ENCODE measurements at regions of chr9 and their contacts with region 1.

Region 1: GRCh38 chr9:75200892-75201470 is 112.7 kb downstream of the OSTF1 start:
- DNase-seq: peak; percentile 22 to 52 (median 26)
- ATAC-seq: peak; percentile 22; the same call in 1 of the 3 replicates
- H3K4me3 ChIP-seq: no peak overlapping the region
- H3K27ac ChIP-seq: no peak overlapping the region
- H3K4me1 ChIP-seq: no peaks in the 10 kb centered on the region
- H3K27me3 ChIP-seq: peaks cover 0 to 7% of the 10 kb centered on the region in 2 experiments; a peak in 3 of 5 replicates
- CTCF ChIP-seq: peak; percentile 37 to 69 (median 40); a peak in 4 of 6 replicates
- EP300 ChIP-seq: no peak
- POLR2A ChIP-seq: no peak
- RAD21 ChIP-seq: peak; percentile 61 to 80

Region 2: DNA sequence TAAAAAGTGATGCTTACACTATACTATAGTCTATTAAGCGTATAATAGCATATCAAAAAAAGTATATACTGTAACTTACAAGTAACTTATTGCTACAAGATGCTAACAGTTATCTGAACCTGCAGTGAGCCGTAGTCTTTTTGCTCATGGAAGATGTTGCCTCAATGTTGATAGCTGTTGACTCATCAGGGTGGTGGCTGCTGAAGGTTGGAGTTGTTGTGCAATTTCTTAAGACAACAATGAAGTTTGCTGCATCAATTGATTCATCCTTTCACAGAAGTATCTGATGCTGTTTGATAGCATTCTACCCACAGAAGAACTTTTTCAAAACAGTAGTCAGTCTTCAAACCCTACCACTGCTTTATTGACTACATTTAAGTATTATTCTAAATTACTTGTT is 240.4 kb before region 1 on chr9:
- CTCF ChIA-PET with region 1: no interaction called
- POLR2A ChIA-PET with region 1: no interaction called
- in situ Hi-C with region 1: no loop called
- intact Hi-C with region 1: no loop called
- DNase-seq: no peak
- ATAC-seq: no peak
- H3K4me3 ChIP-seq: no peak overlapping the region
- H3K27ac ChIP-seq: no peak overlapping the region
- H3K4me1 ChIP-seq: no peaks in the 10 kb centered on the region
- H3K27me3 ChIP-seq: no peaks in the 10 kb centered on the region
- CTCF ChIP-seq: no peak
- EP300 ChIP-seq: no peak
- POLR2A ChIP-seq: no peak
- RAD21 ChIP-seq: no peak

Region 3: GRCh38 chr9:75238311-75238978 is 37.5 kb after region 1 on chr9:
- CTCF ChIA-PET with region 1: interaction called, 6 read pairs
- POLR2A ChIA-PET with region 1: no interaction called
- in situ Hi-C with region 1: no loop called
- intact Hi-C with region 1: loop called (anchors 1 kb)
- DNase-seq: peak; percentile 17 to 43 (median 23)
- ATAC-seq: peak; percentile 96
- H3K4me3 ChIP-seq: no peak overlapping the region
- H3K27ac ChIP-seq: no peak overlapping the region
- H3K4me1 ChIP-seq: no peaks in the 10 kb centered on the region
- H3K27me3 ChIP-seq: no peaks in the 10 kb centered on the region
- CTCF ChIP-seq: peak; percentile 31 to 63 (median 51); a peak in 5 of 6 replicates
- EP300 ChIP-seq: no peak
- POLR2A ChIP-seq: no peak
- RAD21 ChIP-seq: peak; percentile 36 to 61

Region 4: DNA sequence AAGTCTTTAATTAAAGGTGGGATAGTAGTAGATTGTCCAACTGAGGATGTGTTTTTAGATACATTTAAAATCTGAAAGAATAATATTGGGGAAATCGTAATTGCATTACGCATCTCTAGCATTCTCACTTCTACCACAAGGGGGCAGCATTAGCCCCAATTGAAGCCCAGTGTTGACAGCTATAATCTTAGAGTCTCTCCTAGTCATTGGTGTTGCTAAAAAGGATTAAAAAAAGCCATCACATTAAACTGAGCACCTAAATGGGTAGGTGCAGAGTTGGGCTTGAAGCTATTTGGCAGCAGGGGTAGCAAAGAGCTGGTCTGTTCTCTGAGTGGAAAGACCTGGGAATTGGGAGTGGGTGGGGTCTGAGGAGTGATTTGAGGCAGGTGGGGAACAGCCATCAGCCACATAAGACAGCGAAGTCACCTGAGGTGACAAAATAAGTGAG is 64.6 kb after region 1 on chr9:
- CTCF ChIA-PET with region 1: no interaction called
- POLR2A ChIA-PET with region 1: interaction called, 3 read pairs
- in situ Hi-C with region 1: no loop called
- intact Hi-C with region 1: loop called (anchors 2 kb)
- DNase-seq: peak; percentile 23 to 38 (median 32)
- ATAC-seq: peak; percentile 82
- H3K4me3 ChIP-seq: no peak overlapping the region
- H3K27ac ChIP-seq: no peak overlapping the region
- H3K4me1 ChIP-seq: no peaks in the 10 kb centered on the region
- H3K27me3 ChIP-seq: no peaks in the 10 kb centered on the region
- CTCF ChIP-seq: peak; percentile 54 to 69 (median 63)
- EP300 ChIP-seq: no peak
- POLR2A ChIP-seq: no peak
- RAD21 ChIP-seq: peak; percentile 37 to 67

Region 5: DNA sequence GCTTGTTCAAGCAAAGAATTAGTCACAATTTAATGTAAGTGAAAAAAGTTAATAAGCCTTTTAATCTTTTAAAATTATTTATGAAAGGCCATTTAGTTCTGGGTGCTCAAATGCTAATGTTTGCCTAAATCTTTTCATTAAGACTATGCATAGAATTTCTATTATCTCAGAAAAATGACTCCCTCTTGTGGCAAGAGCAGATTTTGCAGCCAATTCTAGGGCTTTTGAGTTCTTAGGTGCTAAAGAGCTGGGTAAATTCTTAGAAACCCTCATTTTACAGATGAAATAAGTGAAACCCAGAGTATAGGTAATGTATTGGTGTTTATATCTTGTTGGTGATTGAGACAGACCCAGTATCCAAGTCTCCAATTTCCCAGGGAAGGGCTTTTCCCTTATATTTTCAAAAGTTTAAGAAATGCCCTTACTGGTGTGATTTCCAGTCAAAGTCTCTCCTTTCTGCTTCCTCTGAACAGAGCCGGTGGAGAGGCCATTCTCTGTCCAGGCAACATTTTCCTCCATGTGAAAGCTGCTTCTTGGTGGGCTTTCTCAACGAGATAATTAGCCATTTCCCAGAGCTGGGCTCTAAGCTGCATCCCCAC is 665.4 kb after region 1 on chr9:
- CTCF ChIA-PET with region 1: no interaction called
- POLR2A ChIA-PET with region 1: no interaction called
- in situ Hi-C with region 1: no loop called
- intact Hi-C with region 1: loop called (anchors 5 kb)
- DNase-seq: peak; percentile 5 to 38 (median 8)
- ATAC-seq: no peak
- H3K4me3 ChIP-seq: no peak overlapping the region
- H3K27ac ChIP-seq: no peak overlapping the region
- H3K4me1 ChIP-seq: no peaks in the 10 kb centered on the region
- H3K27me3 ChIP-seq: no peaks in the 10 kb centered on the region
- CTCF ChIP-seq: peak; percentile 27 to 56 (median 45); a peak in 4 of 6 replicates
- EP300 ChIP-seq: no peak
- POLR2A ChIP-seq: no peak
- RAD21 ChIP-seq: peak; percentile 14 to 43

Region 6: DNA sequence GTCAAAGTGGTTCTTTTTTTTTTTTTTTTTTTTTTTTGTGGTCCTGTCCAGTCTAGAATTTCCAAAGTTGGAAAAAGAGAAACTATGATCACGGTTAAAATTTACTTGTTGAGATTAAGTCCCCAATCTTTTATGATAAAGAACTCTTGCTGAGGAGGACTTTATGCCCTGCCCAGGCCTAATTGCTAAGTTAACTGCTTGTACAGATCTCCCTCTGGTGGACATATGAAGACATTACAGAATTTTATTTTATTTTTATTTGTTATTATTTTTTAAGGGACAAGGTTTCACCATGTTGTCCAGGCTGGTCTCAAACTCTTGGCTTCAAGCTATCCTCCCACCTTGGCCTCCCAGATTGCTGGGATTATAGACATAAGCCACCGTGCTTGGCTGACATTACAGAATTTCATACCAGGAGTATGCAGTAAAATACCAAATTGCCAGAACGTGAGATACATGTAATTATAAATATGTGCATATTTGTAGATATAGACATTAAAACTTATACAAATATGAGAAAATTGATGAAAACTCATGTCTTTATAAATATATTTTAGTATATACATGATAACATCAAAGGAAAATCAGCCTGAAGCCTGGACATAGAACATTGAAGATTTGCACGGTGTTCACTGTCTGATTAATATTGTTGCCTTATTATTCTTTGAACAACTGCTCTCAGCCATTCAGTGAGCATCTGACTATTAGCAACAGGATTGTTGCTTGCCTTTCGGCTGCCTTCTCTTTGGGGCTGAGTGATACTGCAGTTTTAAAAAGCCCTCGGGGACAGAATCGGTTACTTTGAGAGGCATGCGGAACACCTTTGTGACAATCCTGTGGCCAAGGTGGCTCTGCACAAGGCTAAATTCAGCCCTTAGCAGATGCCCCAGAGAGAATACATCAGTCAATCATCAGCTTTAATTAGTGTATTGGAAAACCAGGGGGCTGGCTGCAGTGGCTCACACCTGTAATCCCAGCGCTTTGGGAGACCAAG is 1102.3 kb after region 1 on chr9:
- CTCF ChIA-PET with region 1: no interaction called
- POLR2A ChIA-PET with region 1: no interaction called
- in situ Hi-C with region 1: no loop called
- intact Hi-C with region 1: loop called (anchors 2 kb)
- DNase-seq: peak; percentile 34 to 42 (median 40)
- ATAC-seq: peak; percentile 67
- H3K4me3 ChIP-seq: no peak overlapping the region
- H3K27ac ChIP-seq: no peak overlapping the region
- H3K4me1 ChIP-seq: no peaks in the 10 kb centered on the region
- H3K27me3 ChIP-seq: peaks cover 0 to 5% of the 10 kb centered on the region in 2 experiments; a peak in 2 of 5 replicates
- CTCF ChIP-seq: peak; percentile 29 to 70 (median 34); a peak in 4 of 6 replicates
- EP300 ChIP-seq: no peak
- POLR2A ChIP-seq: no peak
- RAD21 ChIP-seq: peak; percentile 64 to 73